ENCODE measurements at regions of chr10 and their contacts with region 1.

Region 1: DNA sequence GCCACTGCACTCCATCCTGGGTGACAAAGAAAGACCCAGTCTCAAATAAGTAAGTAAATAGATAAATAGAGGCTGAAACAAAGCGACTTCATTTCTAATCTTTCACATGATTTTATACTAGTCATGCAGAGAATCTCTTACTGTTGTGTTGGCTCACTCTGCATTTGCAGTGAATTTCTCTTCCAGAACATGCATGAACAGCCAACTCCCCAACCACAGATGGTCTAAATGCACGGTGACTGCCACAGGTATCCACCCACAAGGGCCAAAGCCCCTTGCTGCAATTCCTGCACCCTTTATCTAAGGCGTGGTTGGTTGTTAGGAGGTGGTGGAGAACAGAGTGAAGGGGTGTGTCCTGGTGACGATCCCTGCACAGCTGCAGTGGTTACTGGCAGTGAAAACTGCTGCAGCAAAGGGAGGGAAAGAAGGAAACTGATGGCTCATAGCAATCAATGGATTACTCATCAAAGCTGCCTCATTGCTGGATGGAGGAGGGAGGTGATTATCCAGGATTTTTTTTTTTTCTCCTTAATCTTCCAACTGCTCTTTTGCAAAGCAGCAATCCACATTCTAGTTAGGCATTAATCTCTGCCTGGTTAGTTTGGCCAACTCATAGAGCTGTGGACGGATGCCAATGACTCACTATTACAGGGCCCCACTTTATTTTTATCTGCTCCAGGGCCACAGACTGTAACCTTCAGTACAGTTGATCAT is 50.6 kb downstream of the PRTFDC1 start:
- DNase-seq: peak; percentile 43
- ATAC-seq: peak; percentile 66
- H3K4me3 ChIP-seq: peak overlapping the region; percentile 28; the same call in 1 of the 2 replicates
- H3K27ac ChIP-seq: peak overlapping the region; percentile 59
- H3K4me1 ChIP-seq: peaks cover 20% of the 10 kb centered on the region
- H3K27me3 ChIP-seq: no peaks in the 10 kb centered on the region
- CTCF ChIP-seq: no peak
- EP300 ChIP-seq: 0 out of 4 replicates have a peak, but pooled peaks of 1 of the 2 experiments have one; percentile 31
- POLR2A ChIP-seq: no peak
- RAD21 ChIP-seq: no peak

Region 2: GRCh38 chr10:24642622-24643417 is 259.0 kb before region 1 on chr10:
- CTCF ChIA-PET with region 1: interaction called, 7 read pairs
- POLR2A ChIA-PET with region 1: no interaction called
- RAD21 ChIA-PET with region 1: interaction called, 18 read pairs
- SMC1A ChIA-PET with region 1: interaction called, 4 read pairs
- in situ Hi-C with region 1: loop called (anchors 5 kb)
- intact Hi-C with region 1: loop called (anchors 1 kb)
- DNase-seq: peak; percentile 40
- ATAC-seq: peak; percentile 86
- H3K4me3 ChIP-seq: no peak overlapping the region
- H3K27ac ChIP-seq: no peak overlapping the region
- H3K4me1 ChIP-seq: peaks cover 14% of the 10 kb centered on the region
- H3K27me3 ChIP-seq: no peaks in the 10 kb centered on the region
- CTCF ChIP-seq: peak; percentile 74 to 85 (median 83)
- EP300 ChIP-seq: no peak
- POLR2A ChIP-seq: no peak
- RAD21 ChIP-seq: peak; percentile 96

Region 3: DNA sequence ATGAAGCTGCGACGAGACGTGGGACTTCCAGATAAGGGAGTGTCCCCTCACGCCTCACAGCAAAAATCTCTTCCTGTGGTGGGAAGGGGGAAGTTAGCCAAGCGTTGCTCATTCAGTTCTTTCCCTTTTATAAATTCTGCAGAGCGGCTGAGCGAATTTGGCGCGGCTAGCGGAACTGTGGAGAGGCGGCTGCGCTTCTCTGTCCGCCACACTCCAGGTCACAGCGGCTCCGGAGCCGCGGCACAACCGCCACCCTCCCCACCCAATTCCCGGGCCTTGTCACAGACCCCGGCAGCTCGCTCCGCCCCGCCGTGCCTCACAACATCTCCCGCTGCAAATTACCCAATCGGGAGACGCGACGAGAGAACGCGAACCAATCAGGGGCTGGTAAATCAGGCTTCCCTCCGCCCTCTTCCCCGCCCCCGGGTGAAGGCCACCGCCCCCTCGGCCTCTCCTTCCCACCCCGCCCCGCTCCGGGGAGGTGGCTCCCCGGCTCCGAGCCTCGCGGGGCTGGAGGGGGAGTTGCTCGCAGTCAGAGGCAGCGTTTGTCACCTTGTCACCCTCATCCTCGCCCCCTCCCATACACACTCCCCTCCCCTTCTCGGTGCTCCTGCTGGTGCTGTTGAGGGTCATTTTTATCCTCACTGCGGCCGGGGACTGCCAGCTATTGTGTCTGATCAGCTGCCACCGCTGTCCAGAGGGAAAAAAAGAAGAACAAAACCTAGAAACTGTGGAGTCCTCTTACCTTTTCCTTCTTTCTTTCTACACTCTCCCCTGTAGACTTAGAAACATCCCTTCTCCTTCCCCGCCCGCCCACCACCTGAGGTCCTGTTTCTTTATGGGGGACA is 177.2 kb before region 1 on chr10:
- CTCF ChIA-PET with region 1: interaction called, 7 read pairs
- POLR2A ChIA-PET with region 1: interaction called, 37 read pairs
- RAD21 ChIA-PET with region 1: interaction called, 14 read pairs
- SMC1A ChIA-PET with region 1: interaction called, 12 read pairs
- in situ Hi-C with region 1: no loop called
- intact Hi-C with region 1: loop called (anchors 1 kb)
- DNase-seq: peak; percentile 90
- ATAC-seq: peak; percentile 87
- H3K4me3 ChIP-seq: peak overlapping the region; percentile 88
- H3K27ac ChIP-seq: peak overlapping the region; percentile 51
- H3K4me1 ChIP-seq: peaks cover 6% of the 10 kb centered on the region; the same call in 1 of the 2 replicates
- H3K27me3 ChIP-seq: no peaks in the 10 kb centered on the region
- CTCF ChIP-seq: no peak
- EP300 ChIP-seq: no peak
- POLR2A ChIP-seq: peak; percentile 89
- RAD21 ChIP-seq: peak; percentile 4; the same call in 1 of the 2 replicates

Region 4: DNA sequence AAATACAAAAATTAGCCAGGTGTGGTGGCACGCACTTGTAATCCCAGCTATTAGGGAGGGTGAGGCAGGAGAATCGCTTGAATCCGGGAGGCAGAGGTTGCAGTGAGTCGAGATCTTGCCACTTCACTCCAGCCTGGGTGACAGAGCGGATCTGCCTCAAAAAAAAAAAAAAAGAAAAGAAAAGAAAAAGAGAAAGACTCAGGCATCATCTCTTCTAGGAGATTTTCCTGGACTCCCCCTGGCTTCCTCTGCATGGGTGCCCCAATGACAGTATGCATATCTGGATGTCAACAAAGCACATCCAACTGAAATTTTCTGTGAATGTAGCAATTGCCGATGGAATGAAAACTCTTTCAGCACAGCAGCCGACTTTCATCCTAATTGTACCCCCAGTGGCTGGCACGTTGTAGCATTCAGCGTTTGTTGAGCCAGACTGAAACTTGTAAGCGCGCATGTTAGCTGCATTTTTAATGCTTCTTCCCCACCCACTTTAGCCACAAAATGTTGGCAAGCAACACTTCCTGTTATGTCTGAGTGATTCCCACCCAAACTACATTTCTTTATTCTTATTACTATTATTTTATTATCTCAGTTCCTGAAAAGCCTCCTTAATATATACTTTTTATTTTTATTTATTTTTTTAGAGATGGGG is 19.7 kb before region 1 on chr10:
- CTCF ChIA-PET with region 1: interaction called, 10 read pairs
- POLR2A ChIA-PET with region 1: interaction called, 19 read pairs
- RAD21 ChIA-PET with region 1: interaction called, 14 read pairs
- SMC1A ChIA-PET with region 1: interaction called, 37 read pairs
- in situ Hi-C with region 1: no loop called
- intact Hi-C with region 1: no loop called
- DNase-seq: peak; percentile 53
- ATAC-seq: peak; percentile 77
- H3K4me3 ChIP-seq: no peak overlapping the region
- H3K27ac ChIP-seq: no peak overlapping the region
- H3K4me1 ChIP-seq: no peaks in the 10 kb centered on the region
- H3K27me3 ChIP-seq: no peaks in the 10 kb centered on the region
- CTCF ChIP-seq: no peak
- EP300 ChIP-seq: no peak
- POLR2A ChIP-seq: no peak
- RAD21 ChIP-seq: no peak

Region 5: GRCh38 chr10:24920907-24921881 is 19.4 kb after region 1 on chr10:
- CTCF ChIA-PET with region 1: interaction called, 7 read pairs
- POLR2A ChIA-PET with region 1: interaction called, 44 read pairs
- RAD21 ChIA-PET with region 1: interaction called, 193 read pairs
- SMC1A ChIA-PET with region 1: interaction called, 338 read pairs
- in situ Hi-C with region 1: no loop called
- intact Hi-C with region 1: loop called (anchors 2 kb)
- DNase-seq: peak; percentile 67
- ATAC-seq: peak; percentile 95
- H3K4me3 ChIP-seq: no peak overlapping the region
- H3K27ac ChIP-seq: peak overlapping the region; percentile 69
- H3K4me1 ChIP-seq: peaks cover 9% of the 10 kb centered on the region
- H3K27me3 ChIP-seq: no peaks in the 10 kb centered on the region
- CTCF ChIP-seq: no peak
- EP300 ChIP-seq: peak; percentile 86 to 91
- POLR2A ChIP-seq: no peak
- RAD21 ChIP-seq: peak; percentile 12; the same call in 1 of the 2 replicates

Region 6: GRCh38 chr10:24982319-24983112 is 80.7 kb after region 1 on chr10:
- CTCF ChIA-PET with region 1: no interaction called
- POLR2A ChIA-PET with region 1: interaction called, 3 read pairs
- RAD21 ChIA-PET with region 1: interaction called, 10 read pairs
- SMC1A ChIA-PET with region 1: interaction called, 14 read pairs
- in situ Hi-C with region 1: no loop called
- intact Hi-C with region 1: loop called (anchors 5 kb)
- DNase-seq: peak; percentile 42
- ATAC-seq: peak; percentile 31; the same call in 2 of the 3 replicates
- H3K4me3 ChIP-seq: no peak overlapping the region
- H3K27ac ChIP-seq: no peak overlapping the region
- H3K4me1 ChIP-seq: peaks cover 4% of the 10 kb centered on the region
- H3K27me3 ChIP-seq: no peaks in the 10 kb centered on the region
- CTCF ChIP-seq: no peak
- EP300 ChIP-seq: no peak
- POLR2A ChIP-seq: no peak
- RAD21 ChIP-seq: no peak